ENCODE measurements at regions of chr3 and their contacts with region 1.

Region 1: DNA sequence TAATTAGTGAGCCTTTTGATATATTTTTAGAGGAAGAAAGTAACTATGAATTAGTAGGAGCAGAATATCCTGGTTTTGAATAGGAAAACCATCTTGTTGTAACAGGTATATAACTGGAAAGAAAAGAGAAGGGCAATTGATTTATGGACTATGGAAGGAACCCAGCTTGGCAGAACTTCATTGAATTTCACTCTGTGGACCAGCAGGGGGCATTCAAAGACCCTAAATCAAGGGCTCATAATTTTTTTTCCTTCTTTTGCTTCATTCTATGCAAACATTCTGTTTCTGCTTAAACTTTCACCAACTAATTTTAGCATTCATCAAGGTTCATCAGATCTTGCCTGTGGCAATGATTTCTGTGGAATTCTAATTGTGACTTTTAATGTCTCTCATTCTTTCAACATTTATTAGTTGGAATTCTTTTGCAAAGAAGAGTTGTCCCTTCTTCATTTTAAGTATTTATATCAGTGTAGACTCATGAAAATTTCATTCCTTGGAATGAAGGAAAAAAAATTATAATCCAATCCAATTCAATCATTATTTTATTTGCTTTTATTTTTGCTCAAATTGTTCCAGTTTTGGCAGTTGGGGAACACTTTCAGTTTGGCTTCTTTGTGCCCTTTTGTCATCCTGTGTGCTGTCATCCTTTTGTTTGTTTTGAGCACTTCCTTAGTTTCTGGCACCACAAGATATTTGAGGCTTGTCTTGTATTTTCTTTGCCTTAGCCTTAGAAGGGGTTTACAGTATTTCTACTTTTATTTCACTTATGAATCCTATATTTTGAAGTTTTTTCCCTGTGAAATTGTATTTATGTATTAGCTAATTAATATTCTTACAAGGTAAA is 30.4 kb downstream of the NXPE3 start:
- H3K4me3 Mint-ChIP-seq: no peak overlapping the region
- H3K27ac Mint-ChIP-seq: no peak overlapping the region
- H3K4me1 Mint-ChIP-seq: peaks cover 10% of the 10 kb centered on the region
- H3K27me3 Mint-ChIP-seq: no peaks in the 10 kb centered on the region

Region 2: GRCh38 chr3:101548527-101549105 is 260.8 kb before region 1 on chr3:
- intact Hi-C with region 1: no loop called
- H3K4me3 Mint-ChIP-seq: no peak overlapping the region
- H3K27ac Mint-ChIP-seq: no peak overlapping the region
- H3K4me1 Mint-ChIP-seq: no peaks in the 10 kb centered on the region
- H3K27me3 Mint-ChIP-seq: no peaks in the 10 kb centered on the region

Region 3: DNA sequence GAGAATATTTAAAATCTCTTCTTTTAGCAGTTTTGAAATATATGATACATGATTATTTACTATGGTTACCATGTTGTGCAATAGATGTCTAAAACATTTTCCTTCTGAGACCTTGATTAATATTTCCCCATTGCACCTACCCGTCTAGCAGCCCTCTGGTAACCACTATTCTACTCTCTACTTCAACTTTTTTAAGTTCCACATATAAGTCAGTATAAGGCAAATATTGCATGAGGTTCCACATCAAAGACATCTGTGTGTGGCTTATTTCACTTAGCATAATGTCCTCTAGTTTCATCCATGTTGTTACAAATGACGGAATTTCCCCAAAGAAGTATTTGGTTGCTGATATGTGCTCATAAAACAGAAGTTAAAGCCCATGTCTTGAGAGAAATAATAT is 10.4 kb after region 1 on chr3:
- intact Hi-C with region 1: no loop called
- H3K4me3 Mint-ChIP-seq: no peak overlapping the region
- H3K27ac Mint-ChIP-seq: no peak overlapping the region
- H3K4me1 Mint-ChIP-seq: peaks cover 34% of the 10 kb centered on the region
- H3K27me3 Mint-ChIP-seq: no peaks in the 10 kb centered on the region

Region 4: DNA sequence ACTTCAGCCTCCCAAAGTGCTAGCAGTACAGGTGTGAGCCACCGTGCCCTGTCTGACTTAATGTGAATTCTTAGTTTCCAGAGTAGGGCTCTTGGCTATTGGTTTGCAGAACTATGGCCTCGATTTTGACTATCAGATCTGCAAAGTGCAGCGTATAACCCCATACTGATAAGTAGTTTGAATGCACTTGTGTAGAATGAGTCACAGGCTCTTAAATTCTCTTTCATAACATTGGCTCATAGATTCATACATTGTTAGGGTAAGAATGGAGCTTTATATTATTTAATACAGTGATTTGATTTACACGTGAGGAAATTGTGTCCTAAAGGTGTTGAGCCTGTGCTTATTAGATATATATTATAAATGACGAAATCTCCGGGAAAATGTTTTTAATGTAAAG is 735.3 kb after region 1 on chr3:
- intact Hi-C with region 1: loop called (anchors 5 kb)
- H3K4me3 Mint-ChIP-seq: no peak overlapping the region
- H3K27ac Mint-ChIP-seq: no peak overlapping the region
- H3K4me1 Mint-ChIP-seq: no peaks in the 10 kb centered on the region
- H3K27me3 Mint-ChIP-seq: peaks cover 2% of the 10 kb centered on the region

Measured in dendritic cell treated with granulocyte-macrophage colony-stimulating factor and Interleukin-4, amounts not matched to agents 40 ng/mL and 50 ng/mL, for 4 days (primary cell).